Posterior vena cava (tissue), 2 donors: ENCODE measurements at regions of chr3 and their contacts with region 1.

Region 1: DNA sequence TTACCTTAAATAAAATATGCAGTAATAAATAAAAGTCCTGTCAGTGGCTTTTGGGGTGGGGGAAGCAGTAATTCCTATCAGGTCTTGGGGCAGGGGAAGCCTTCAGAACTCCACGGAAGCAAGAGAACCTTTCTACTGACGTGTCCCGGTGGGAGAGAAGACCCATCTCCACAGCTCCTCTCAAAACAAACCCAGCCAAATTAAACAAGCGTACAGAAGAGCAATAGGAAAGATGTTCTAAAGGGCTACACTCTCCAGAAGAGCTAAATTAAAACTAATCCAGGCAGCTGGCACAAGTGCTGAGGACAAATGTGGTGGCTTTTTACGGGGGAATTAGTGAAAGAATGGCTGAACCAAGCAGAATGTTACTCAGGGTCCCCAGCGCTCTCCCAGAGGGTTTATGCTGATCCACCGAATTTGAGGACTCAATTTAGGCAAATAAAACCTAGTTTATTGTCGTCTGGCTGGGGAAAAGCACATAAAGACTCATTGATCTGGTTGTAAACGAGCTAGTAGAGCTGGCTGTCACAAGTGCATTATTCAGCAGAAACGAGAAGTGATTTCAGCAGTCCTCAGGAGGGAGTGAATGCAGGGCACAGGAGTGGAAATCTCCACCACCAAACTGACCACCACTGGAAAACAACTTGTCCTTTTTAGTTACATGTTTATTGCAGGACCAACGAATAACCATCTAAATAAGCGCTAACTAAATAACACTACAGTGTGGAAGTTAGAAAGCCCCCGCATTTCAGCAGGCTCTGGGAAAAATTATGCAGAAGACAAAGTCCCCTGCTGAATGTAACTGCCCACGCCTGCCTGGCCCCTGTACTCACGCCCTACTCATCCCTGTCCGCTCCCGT is 13.5 kb downstream of the BFSP2 start:
- DNase-seq: no peak

Region 2: DNA sequence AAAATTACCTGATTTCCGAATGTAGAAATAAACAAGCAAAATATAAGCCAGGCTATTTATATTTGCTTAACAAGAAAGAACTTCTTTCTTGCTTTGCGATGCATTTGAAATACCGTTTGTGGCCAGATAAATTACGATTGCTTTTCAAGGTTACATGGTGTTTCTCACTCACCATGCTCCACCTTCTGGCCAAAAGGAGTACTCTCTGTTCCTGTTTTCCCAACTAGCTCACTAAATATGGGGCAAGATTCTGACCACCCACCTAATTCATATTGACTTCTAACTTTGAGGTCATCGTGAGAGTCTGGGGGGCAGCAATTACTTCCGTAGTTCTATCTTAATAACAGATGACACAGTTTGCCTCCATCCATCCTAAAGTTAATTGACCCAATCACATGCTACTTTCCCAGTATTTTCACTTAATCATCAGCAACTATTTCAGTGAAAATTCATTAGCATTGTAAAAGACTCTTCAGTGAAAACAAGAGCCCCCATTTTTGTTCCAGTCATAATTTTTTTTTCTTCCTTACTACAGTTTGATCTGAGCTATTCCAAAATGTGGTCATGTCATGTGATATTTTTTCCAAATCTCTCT is 1070.3 kb before region 1 on chr3:
- intact Hi-C with region 1: no loop called
- DNase-seq: no peak

Region 3: DNA sequence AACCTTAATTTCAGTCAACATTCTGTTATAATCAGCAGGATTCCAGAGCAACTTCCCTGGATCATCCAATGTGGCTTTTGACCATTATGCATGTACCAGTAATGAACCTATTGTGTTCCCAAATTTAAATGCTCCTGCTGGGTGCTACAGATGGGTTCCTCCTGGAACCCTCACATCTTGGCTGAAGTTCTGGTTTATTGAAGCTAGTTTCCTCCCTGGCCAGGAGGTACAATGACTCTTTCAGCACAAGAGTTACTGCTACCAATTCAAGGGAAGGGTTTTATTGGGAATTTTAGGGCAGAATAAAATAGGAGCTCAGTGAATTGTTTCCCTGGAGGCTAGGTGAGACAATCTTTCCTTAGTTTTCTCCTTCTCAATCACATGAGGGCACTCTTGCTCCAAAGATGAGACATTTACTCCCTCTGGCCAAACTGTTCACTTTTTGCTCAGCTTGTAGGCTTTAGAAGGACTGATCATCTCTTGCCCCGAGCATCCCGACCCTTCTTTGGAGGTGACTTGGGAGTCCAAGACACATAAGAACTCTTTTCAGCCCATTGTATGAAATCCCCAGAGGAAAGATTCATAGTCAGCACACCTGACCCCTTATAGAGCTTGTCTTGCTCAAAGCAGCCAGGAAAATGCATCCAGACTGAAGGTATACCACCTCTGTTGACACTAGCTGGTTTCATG is 682.4 kb before region 1 on chr3:
- intact Hi-C with region 1: loop called in 1 of 2 experiments (anchors 10 kb)
- DNase-seq: no peak

Region 4: GRCh38 chr3:133910422-133910821 is 497.0 kb after region 1 on chr3:
- intact Hi-C with region 1: no loop called
- DNase-seq: no peak